ENCODE measurements at regions of chr16 and their contacts with region 1.

Region 1: GRCh38 chr16:79601931-79602627 is 1.5 kb upstream of the MAF start:
- DNase-seq: peak in 9 of 10 donors; percentile 53 to 86 (median 77)
- H3K4me3 ChIP-seq: peak overlapping the region; percentile 51 to 85 (median 73)
- H3K27ac ChIP-seq: peak overlapping the region in 54 of 59 donors; percentile 5 to 98 (median 93)
- H3K27me3 ChIP-seq: peaks cover 0 to 16% (median 0%) of the 10 kb centered on the region in 45 donors
- CTCF ChIP-seq: peak; percentile 74 to 96 (median 86)

Region 2: DNA sequence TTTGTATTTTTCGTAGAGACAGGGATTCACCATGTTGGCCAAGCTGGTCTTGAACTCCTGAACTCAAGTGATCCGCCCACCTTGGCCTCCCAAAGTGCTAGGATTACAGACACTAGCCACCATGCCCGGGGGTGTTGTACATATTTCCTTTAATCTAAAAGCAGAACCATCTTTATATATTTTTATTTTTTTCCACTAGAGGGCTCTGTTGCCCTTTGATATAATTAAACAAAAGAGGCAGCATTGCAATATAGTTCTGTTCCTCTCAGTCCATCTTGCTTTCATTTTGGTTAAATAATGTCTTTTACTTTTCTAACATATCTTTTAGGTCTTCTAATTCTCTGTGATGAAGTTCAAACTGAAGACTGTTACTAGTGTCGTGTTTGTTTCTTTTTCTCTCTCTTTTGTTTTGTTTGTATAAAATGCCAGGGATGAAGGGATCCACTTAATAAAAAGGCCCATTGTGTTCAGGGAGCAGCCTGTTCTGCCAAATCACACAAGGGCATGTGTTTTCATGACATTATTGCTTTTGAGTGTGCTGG is 1479.2 kb before region 1 on chr16:
- intact Hi-C with region 1: loop called (anchors 5 kb)
- DNase-seq: peak in 2 of 10 donors; percentile 71 to 73
- H3K4me3 ChIP-seq: peak overlapping the region in 51 of 59 donors; percentile 8 to 59 (median 36)
- H3K27ac ChIP-seq: peak overlapping the region; percentile 72 to 99 (median 96)
- H3K27me3 ChIP-seq: no peaks in the 10 kb centered on the region
- CTCF ChIP-seq: peak; percentile 58 to 91 (median 76)

Region 3: GRCh38 chr16:78770353-78771091 is 831.6 kb before region 1 on chr16:
- intact Hi-C with region 1: loop called in 1 of 2 experiments (anchors 10 kb)
- DNase-seq: peak; percentile 20 to 81 (median 69)
- H3K4me3 ChIP-seq: peak overlapping the region in 6 of 59 donors; percentile 2 to 28 (median 23)
- H3K27ac ChIP-seq: peak overlapping the region in 1 of 59 donors; percentile 15
- H3K27me3 ChIP-seq: no peaks in the 10 kb centered on the region
- CTCF ChIP-seq: peak; percentile 56 to 92 (median 84)

Region 4: GRCh38 chr16:79089735-79090284 is 512.3 kb before region 1 on chr16:
- intact Hi-C with region 1: loop called in 1 of 2 experiments (anchors 10 kb)
- DNase-seq: no peak
- H3K4me3 ChIP-seq: peak overlapping the region in 1 of 59 donors; percentile 2
- H3K27ac ChIP-seq: no peak overlapping the region
- H3K27me3 ChIP-seq: no peaks in the 10 kb centered on the region
- CTCF ChIP-seq: no peak

Region 5: GRCh38 chr16:79640513-79641355 is 38.7 kb after region 1 on chr16:
- intact Hi-C with region 1: no loop called
- DNase-seq: no peak
- H3K4me3 ChIP-seq: peak overlapping the region in 1 of 59 donors; percentile 17
- H3K27ac ChIP-seq: no peak overlapping the region
- H3K27me3 ChIP-seq: peaks cover 0 to 58% (median 3%) of the 10 kb centered on the region in 45 donors
- CTCF ChIP-seq: no peak

Region 6: GRCh38 chr16:80084685-80085084 is 482.6 kb after region 1 on chr16:
- intact Hi-C with region 1: loop called in 1 of 2 experiments (anchors 5 kb)
- DNase-seq: peak in 6 of 10 donors; percentile 7 to 48 (median 38)
- H3K4me3 ChIP-seq: peak overlapping the region in 2 of 59 donors; percentile 1 to 13
- H3K27ac ChIP-seq: no peak overlapping the region
- H3K27me3 ChIP-seq: peaks cover 0 to 26% (median 0%) of the 10 kb centered on the region in 45 donors
- CTCF ChIP-seq: peak in 55 of 56 donors; percentile 9 to 79 (median 59)